GM12878 (cell line): ENCODE measurements at regions of chr17 and their contacts with region 1.

Region 1: GRCh38 chr17:32536736-32537643 is 50.2 kb downstream of the CDK5R1 start:
- DNase-seq: no peak
- ATAC-seq: no peak
- H3K4me3 ChIP-seq: no peak overlapping the region
- H3K27ac ChIP-seq: no peak overlapping the region
- H3K4me1 ChIP-seq: no peaks in the 10 kb centered on the region
- H3K27me3 ChIP-seq: no peaks in the 10 kb centered on the region
- CTCF ChIP-seq: no peak
- EP300 ChIP-seq: no peak
- POLR2A ChIP-seq: no peak
- RAD21 ChIP-seq: no peak

Region 2: GRCh38 chr17:32551186-32551955 is 14.4 kb after region 1 on chr17:
- CTCF ChIA-PET with region 1: interaction called, 6 read pairs
- POLR2A ChIA-PET with region 1: interaction called, 6 read pairs
- RAD21 ChIA-PET with region 1: interaction called, 3 read pairs
- SMC1A ChIA-PET with region 1: interaction called, 11 read pairs
- in situ Hi-C with region 1: no loop called
- intact Hi-C with region 1: no loop called
- DNase-seq: peak; percentile 71
- ATAC-seq: peak; percentile 96
- H3K4me3 ChIP-seq: no peak overlapping the region
- H3K27ac ChIP-seq: peak overlapping the region; percentile 38
- H3K4me1 ChIP-seq: peaks cover 24% of the 10 kb centered on the region
- H3K27me3 ChIP-seq: no peaks in the 10 kb centered on the region
- CTCF ChIP-seq: no peak
- EP300 ChIP-seq: peak in 1 of 2 experiments; percentile 48; a peak in 2 of 4 replicates
- POLR2A ChIP-seq: no peak
- RAD21 ChIP-seq: peak; percentile 27; the same call in 1 of the 2 replicates

Region 3: DNA sequence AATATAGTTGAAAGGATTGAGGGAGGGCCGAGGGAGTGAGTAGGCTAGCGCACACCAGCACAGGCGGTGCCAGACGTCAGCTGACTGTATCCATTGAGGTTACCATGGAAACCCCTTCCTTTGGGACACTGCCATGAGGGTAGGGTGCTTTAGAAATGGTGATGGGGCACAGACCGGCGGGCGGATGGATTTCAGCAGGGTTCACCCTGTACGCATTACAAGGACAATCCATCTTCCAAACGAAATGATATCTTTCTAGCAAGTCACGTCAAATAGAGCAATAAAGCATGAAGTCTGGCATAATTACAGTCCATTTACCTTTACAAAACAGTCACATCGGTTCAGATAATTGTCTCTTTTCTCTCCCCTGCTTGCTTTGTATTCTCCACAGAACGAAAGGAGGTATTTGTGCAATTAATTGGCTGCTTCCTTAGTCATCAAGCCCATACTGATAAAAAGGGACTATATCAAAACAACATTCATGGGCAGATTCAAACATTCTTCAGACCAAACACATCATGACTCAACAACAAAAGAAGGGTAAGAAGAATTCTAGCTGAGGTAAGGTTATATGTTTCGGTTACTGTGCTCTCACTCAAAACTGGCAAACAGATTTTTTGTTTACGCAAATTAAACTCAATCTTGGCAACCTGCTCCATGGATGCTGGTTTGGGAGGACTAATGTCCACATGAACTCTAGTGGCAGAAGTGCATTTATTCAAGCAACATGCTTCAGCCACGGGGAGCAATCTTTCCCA is 90.4 kb after region 1 on chr17:
- CTCF ChIA-PET with region 1: no interaction called
- POLR2A ChIA-PET with region 1: no interaction called
- RAD21 ChIA-PET with region 1: no interaction called
- SMC1A ChIA-PET with region 1: no interaction called
- in situ Hi-C with region 1: no loop called
- intact Hi-C with region 1: no loop called
- DNase-seq: no peak
- ATAC-seq: no peak
- H3K4me3 ChIP-seq: no peak overlapping the region
- H3K27ac ChIP-seq: no peak overlapping the region
- H3K4me1 ChIP-seq: no peaks in the 10 kb centered on the region
- H3K27me3 ChIP-seq: no peaks in the 10 kb centered on the region
- CTCF ChIP-seq: no peak
- EP300 ChIP-seq: no peak
- POLR2A ChIP-seq: no peak
- RAD21 ChIP-seq: no peak